Activated CD8-positive, alpha-beta T cell treated with anti-CD3 and anti-CD28 coated beads, Interleukin-2, amount 10 ng/mL, durations not matched to agents 7 days and 5 days (primary cell): ENCODE measurements at regions of chr21 and their contacts with region 1.

Region 1: DNA sequence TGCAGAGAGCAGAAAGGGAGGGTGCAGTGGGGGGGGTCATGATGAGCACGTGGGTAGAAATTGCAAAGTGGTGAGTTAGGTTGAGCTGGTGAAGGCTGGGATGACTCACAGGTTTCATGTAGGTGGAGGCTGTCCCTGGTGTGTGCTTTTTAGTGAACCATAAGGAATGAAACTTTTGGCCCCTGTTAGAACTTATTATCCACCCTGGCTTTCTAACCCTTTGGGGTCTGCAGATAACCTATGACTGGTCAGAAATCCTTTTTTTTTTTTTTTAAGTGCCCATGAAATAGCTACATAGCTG is 46.9 kb downstream of the DOP1B start:
- DNase-seq: peak; percentile 54
- ATAC-seq: peak; percentile 85
- H3K4me3 Mint-ChIP-seq: no peak overlapping the region
- H3K27ac Mint-ChIP-seq: peak overlapping the region; percentile 61
- H3K4me1 Mint-ChIP-seq: peaks cover 29% of the 10 kb centered on the region
- H3K27me3 Mint-ChIP-seq: no peaks in the 10 kb centered on the region

Region 2: GRCh38 chr21:35932232-35932911 is 271.2 kb before region 1 on chr21:
- CTCF ChIA-PET with region 1: no interaction called
- POLR2A ChIA-PET with region 1: no interaction called
- DNase-seq: peak; percentile 26
- ATAC-seq: peak; percentile 39
- H3K4me3 Mint-ChIP-seq: no peak overlapping the region
- H3K27ac Mint-ChIP-seq: no peak overlapping the region
- H3K4me1 Mint-ChIP-seq: no peaks in the 10 kb centered on the region
- H3K27me3 Mint-ChIP-seq: no peaks in the 10 kb centered on the region

Region 3: DNA sequence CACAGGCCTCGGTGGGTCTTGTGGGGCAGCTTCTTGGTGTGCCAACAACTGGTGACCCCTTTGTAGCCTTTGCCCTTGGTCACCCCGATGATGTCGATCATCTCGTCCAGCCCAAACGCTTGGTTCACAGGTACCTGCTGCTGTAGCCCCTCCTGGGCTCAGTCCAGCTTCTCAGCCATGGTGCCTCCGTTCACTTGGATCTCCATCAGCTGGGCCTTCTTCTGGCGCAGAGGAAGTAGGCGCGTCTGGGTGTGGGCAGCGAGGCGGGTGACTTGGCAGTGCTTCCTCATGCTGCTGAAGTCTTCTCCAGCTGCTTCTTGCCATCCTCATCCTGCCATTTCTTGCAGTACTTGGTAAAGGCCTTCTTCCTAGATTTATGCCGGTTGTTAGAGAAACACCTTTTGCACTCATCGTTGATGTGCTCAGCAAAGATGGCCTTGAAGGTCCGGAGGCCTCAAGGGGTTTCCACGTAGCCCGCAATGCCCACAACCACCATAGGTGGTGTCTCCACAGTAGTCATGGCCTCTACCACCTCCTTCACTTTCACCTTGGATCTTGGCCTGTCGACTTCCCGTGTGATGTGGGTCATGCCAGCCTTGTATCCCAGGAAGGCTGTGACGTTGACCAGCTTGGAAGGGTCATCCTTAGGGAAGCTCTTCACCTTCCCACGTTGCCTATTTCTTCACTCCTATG is 34.0 kb before region 1 on chr21:
- CTCF ChIA-PET with region 1: interaction called, 10 read pairs
- POLR2A ChIA-PET with region 1: no interaction called
- DNase-seq: peak; percentile 28
- ATAC-seq: no peak
- H3K4me3 Mint-ChIP-seq: no peak overlapping the region
- H3K27ac Mint-ChIP-seq: no peak overlapping the region
- H3K4me1 Mint-ChIP-seq: peaks cover 14% of the 10 kb centered on the region
- H3K27me3 Mint-ChIP-seq: no peaks in the 10 kb centered on the region